Right ventricle myocardium inferior (tissue), 1 donor: ENCODE measurements at regions of chr11 and their contacts with region 1.

Region 1: GRCh38 chr11:31870609-31871309 is 59.6 kb upstream of the PAX6 start:
- DNase-seq: no peak
- ATAC-seq: peak; percentile 63

Region 2: GRCh38 chr11:31240338-31240904 is 630.3 kb before region 1 on chr11:
- intact Hi-C with region 1: loop called (anchors 5 kb)
- DNase-seq: no peak
- ATAC-seq: no peak

Region 3: GRCh38 chr11:31397239-31397834 is 473.4 kb before region 1 on chr11:
- intact Hi-C with region 1: loop called (anchors 2 kb)
- DNase-seq: no peak
- ATAC-seq: no peak

Region 4: DNA sequence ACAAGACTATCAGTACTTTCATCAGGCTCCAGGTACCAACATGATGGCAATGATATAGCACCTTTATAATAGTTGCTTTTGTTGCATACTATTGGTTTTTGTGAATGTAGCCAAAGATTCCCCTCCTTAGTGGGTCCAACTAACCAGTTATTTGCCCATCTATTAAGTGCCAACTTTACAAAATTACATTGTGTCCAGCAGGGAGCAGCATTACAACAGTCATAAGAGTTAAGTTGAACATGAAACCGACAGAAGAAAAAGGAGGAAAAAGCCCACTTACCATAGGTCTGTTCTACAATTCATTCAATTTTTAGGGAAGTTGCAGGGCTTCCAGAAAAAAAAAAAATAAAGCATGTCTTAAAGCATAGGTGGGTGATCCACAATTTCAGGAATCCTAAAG is 382.9 kb before region 1 on chr11:
- intact Hi-C with region 1: loop called (anchors 10 kb)
- DNase-seq: no peak
- ATAC-seq: no peak

Region 5: DNA sequence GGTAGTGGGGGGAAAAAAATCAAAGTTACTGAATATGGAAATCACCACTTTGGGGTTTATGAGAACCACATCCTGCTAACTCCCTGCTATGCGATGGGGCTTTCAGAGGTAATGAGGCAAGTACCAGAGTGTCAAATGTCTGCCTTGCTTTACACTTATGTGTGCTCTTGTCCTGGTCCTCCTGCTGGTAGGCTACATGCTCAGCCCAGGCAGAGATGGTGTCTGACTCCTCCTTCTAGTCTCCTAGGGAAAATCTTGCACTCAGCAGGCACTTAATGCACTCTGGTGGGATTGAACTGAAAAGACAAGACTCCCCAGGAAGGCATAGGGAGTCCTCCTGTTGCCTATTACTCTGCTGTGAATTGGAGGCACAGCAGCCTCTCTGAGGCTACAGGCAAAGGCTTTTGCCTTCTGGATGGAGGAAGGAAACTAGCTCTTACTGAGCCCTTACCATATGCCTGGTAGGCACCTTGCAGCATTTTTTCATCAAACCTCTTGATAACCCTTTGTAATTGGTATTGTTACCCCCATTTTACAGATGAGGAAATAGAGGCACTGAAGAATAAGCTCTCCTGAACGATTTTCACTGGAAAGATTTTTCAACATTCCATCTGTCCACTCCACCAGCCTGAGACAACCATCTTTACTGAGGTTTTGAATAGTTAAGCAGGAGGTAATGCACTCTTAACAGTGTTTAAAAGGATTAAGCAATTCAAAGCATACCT is 72.5 kb after region 1 on chr11:
- intact Hi-C with region 1: no loop called
- DNase-seq: no peak
- ATAC-seq: no peak